A673 (cell line): ENCODE measurements at regions of chr7 and their contacts with region 1.

Region 1: DNA sequence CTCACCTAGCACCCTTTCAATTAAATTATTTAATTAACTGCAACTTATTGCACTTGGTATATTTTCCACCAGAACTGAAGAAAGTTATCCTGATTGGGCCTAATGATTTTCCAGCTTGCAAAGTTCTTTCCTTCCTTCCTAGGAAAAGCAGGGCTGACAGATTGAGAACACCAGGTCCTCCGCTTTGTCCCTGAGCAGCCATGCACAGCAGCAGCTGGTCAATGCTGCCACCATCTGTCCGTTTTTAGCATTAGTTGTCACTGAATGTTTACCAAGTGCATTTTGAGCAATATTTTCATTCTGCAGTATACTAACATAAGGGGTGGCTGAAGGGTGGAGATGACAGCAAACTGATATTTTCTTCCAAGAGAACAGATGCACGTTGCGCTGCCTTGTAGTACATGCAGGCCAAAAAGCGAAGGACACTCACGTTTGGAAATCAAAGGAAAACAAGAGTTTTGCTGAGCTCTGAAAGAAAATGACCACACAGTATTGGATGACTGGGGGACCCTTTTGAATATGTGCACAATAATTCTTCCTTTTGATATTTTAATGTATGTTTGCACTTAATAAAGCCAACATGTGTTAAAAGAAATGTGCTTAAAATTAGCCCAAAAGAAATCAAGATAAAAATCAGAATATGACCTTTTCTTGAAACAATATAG is 248.8 kb upstream of the PTN start:
- DNase-seq: peak; percentile 82
- H3K4me3 ChIP-seq: no peak overlapping the region
- H3K27ac ChIP-seq: peak overlapping the region; percentile 58
- H3K4me1 ChIP-seq: peaks cover 10% of the 10 kb centered on the region
- H3K27me3 ChIP-seq: no peaks in the 10 kb centered on the region
- CTCF ChIP-seq: peak; percentile 88

Region 2: GRCh38 chr7:136405931-136406777 is 1186.2 kb before region 1 on chr7:
- CTCF ChIA-PET with region 1: no interaction called
- POLR2A ChIA-PET with region 1: no interaction called
- intact Hi-C with region 1: loop called (anchors 5 kb)
- DNase-seq: peak; percentile 90
- H3K4me3 ChIP-seq: peak overlapping the region; percentile 44
- H3K27ac ChIP-seq: peak overlapping the region; percentile 71
- H3K4me1 ChIP-seq: peaks cover 33% of the 10 kb centered on the region
- H3K27me3 ChIP-seq: no peaks in the 10 kb centered on the region
- CTCF ChIP-seq: peak; percentile 87

Region 3: GRCh38 chr7:137169282-137169698 is 423.1 kb before region 1 on chr7:
- CTCF ChIA-PET with region 1: interaction called, 6 read pairs
- POLR2A ChIA-PET with region 1: no interaction called
- intact Hi-C with region 1: loop called (anchors 2 kb)
- DNase-seq: peak; percentile 75
- H3K4me3 ChIP-seq: no peak overlapping the region
- H3K27ac ChIP-seq: no peak overlapping the region
- H3K4me1 ChIP-seq: no peaks in the 10 kb centered on the region
- H3K27me3 ChIP-seq: no peaks in the 10 kb centered on the region
- CTCF ChIP-seq: peak; percentile 70

Region 4: DNA sequence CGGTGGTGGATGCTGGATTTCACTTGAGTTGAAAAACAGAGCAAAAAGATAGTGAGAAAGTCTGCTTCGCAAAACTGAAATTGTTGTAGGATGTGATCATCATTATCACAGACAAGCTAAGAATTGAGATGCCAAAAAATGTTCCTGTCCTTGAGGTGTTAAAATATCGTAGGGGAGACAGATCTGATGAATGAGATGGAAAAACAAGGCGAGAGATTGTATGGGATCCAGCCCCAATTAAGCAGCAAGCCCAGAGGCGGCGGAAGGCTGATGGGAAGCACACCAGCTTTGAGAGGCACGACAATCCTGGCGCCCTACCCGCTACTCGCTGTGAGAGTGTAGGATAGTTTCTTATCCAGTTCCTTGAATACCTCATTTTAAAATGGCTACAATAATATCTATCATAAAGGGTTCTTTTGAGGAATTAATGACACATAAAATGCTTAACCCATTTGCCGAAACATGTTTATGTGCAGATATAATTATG is 117.8 kb before region 1 on chr7:
- CTCF ChIA-PET with region 1: no interaction called
- POLR2A ChIA-PET with region 1: no interaction called
- intact Hi-C with region 1: no loop called
- DNase-seq: no peak
- H3K4me3 ChIP-seq: no peak overlapping the region
- H3K27ac ChIP-seq: no peak overlapping the region
- H3K4me1 ChIP-seq: no peaks in the 10 kb centered on the region
- H3K27me3 ChIP-seq: no peaks in the 10 kb centered on the region
- CTCF ChIP-seq: no peak